Sciatic nerve (tissue), 2 donors: ENCODE measurements at regions of chr6 and their contacts with region 1.

Region 1: GRCh38 chr6:135102191-135102590 is 47.6 kb upstream of the HBS1L start:
- DNase-seq: no peak
- ATAC-seq: no peak

Region 2: DNA sequence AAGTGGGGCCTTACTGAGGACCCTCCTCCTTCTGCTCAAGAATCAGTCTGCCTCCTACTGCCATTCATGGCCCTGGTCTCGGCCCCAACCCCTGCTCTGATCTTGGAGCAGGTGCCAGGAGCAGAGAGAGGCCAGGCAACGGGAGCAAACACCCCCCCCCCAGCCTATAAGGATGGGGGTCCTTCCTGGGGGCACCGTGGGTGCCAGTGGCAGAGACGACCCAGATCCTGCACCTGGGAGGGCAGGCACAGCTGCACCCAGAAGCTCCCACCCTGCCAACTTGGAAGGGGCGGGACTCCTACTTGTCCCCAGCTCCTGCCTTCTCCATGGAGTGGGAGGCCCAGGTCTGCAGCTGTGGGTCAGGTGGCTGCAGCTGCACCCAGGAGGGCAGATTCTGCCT is 1677.8 kb before region 1 on chr6:
- intact Hi-C with region 1: no loop called
- DNase-seq: no peak
- ATAC-seq: peak; percentile 45

Region 3: DNA sequence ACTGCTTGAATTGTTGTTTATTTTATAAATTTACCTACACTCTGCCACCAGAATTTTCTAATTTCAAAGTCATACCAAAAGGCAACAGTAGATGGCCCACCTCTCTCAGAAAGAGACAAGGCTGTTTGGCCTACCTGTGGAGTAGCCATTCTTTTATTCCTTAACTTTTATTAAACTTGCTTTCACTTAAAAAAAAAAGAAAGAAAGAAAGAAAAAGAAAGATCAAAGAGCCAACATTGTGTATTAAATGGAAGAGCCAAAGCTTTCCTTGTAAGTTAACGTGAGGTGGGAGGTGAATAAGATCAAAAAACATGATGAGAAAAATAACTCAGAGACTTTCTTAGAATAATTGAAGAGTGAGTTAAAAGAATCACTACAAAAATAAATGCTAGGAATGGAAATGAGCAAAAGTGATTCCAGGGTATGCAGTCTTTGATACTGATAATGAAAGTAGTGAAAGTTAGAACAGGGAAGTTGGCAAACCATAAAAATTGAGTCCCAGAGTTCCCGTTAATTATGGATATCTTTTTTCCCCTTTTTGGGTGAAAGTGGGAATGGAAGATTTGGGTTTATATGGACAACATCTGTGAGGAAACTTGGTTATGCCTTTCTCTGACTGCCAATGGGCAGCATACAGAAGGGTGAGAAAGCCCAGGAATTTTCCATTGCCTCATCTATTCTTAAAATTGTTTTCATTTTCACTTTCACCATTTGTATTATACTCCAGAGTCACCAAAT is 43.0 kb after region 1 on chr6:
- intact Hi-C with region 1: no loop called
- DNase-seq: no peak
- ATAC-seq: no peak

Region 4: GRCh38 chr6:135393289-135393688 is 291.1 kb after region 1 on chr6:
- intact Hi-C with region 1: loop called (anchors 5 kb)
- DNase-seq: no peak
- ATAC-seq: no peak